HCT116 (cell line): ENCODE measurements at regions of chr4 and their contacts with region 1.

Region 1: DNA sequence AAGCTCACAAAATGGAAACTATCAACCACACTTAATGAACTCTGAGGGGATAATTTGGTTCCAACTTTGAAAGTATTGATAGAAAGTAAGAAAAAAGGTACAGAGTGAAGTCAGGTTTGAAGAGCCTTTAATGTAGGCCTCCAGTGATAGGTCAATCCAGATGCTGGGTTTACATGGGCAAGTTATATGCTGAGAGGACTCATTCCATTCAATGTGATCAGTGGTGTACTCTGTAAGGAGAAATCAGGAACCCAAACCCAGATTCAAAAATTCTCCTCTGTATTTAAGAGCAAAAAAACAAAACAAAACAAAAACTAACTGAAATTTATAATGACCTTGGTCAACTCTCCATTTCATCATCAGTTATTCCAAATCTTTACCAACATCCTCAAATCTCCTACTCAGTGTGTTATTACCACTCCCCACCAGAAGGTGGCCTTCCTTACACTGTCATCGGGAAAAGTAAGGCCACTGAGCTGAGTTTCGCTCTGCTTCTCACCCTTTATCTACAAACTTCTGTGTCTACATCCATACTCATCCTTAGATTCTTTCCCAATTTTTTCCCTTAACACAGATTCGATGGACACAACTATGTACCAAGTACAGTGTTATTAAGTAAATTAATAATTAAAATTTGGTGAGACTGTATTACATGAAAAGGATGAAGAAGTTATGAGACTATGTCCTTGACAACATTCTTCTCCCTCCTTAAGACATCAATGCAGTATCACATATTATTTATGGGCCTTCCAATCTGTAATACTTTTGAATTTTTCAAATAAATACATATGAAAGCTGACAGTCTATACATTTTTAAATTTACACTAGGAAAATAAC is 88.3 kb downstream of the ZAR1 start:
- DNase-seq: peak; percentile 36
- ATAC-seq: peak; percentile 91
- H3K4me3 ChIP-seq: no peak overlapping the region
- H3K27ac ChIP-seq: no peak overlapping the region
- H3K4me1 ChIP-seq: no peaks in the 10 kb centered on the region
- H3K27me3 ChIP-seq: no peaks in the 10 kb centered on the region
- CTCF ChIP-seq: peak; percentile 78
- POLR2A ChIP-seq: no peak
- RAD21 ChIP-seq: peak; percentile 85

Region 2: GRCh38 chr4:48008021-48008596 is 570.2 kb before region 1 on chr4:
- CTCF ChIA-PET with region 1: no interaction called
- POLR2A ChIA-PET with region 1: no interaction called
- RAD21 ChIA-PET with region 1: no interaction called
- intact Hi-C with region 1: no loop called
- DNase-seq: peak; percentile 34
- ATAC-seq: no peak
- H3K4me3 ChIP-seq: no peak overlapping the region
- H3K27ac ChIP-seq: no peak overlapping the region
- H3K4me1 ChIP-seq: no peaks in the 10 kb centered on the region
- H3K27me3 ChIP-seq: no peaks in the 10 kb centered on the region
- CTCF ChIP-seq: no peak
- POLR2A ChIP-seq: no peak
- RAD21 ChIP-seq: no peak

Region 3: DNA sequence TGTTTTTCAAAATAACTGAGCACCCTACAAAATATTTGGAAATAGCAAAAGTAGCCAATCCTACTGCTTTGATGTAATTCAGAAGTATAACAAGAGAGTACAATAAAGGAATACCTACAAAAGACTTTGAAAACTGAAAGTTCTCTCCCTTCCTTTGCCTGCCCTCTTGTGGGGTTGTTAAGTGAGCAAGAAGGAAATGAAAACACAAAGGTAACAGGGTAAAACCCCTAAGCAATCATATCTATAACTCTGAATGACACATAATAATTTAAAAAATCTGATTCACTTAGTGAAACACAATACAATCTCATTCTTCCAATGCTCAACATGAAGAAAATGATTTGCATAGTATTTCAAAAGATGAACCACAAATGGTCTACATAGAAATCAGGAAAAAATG is 103.5 kb after region 1 on chr4:
- CTCF ChIA-PET with region 1: interaction called, 6 read pairs
- POLR2A ChIA-PET with region 1: no interaction called
- RAD21 ChIA-PET with region 1: no interaction called
- intact Hi-C with region 1: loop called (anchors 5 kb)
- DNase-seq: no peak
- ATAC-seq: no peak
- H3K4me3 ChIP-seq: no peak overlapping the region
- H3K27ac ChIP-seq: no peak overlapping the region
- H3K4me1 ChIP-seq: no peaks in the 10 kb centered on the region
- H3K27me3 ChIP-seq: no peaks in the 10 kb centered on the region
- CTCF ChIP-seq: peak in 2 of 3 experiments; percentile 32 to 34; a peak in 3 of 6 replicates
- POLR2A ChIP-seq: no peak
- RAD21 ChIP-seq: peak; percentile 51

Region 4: GRCh38 chr4:48779998-48780742 is 201.8 kb after region 1 on chr4 and contains the start of gene FRYL:
- CTCF ChIA-PET with region 1: interaction called, 5 read pairs
- POLR2A ChIA-PET with region 1: no interaction called
- RAD21 ChIA-PET with region 1: no interaction called
- intact Hi-C with region 1: loop called (anchors 5 kb)
- DNase-seq: peak; percentile 99
- ATAC-seq: peak; percentile 93
- H3K4me3 ChIP-seq: peak within 1 kb of the TSS; percentile 68 to 71
- H3K27ac ChIP-seq: peak within 1 kb of the TSS; percentile 86
- H3K4me1 ChIP-seq: peaks cover 8 to 24% of the 10 kb centered on the region in 2 experiments
- H3K27me3 ChIP-seq: no peaks in the 10 kb centered on the region
- CTCF ChIP-seq: no peak
- POLR2A ChIP-seq: peak; percentile 75
- RAD21 ChIP-seq: no peak
- total RNA-seq, gene FRYL: 47.7 TPM

Region 5: DNA sequence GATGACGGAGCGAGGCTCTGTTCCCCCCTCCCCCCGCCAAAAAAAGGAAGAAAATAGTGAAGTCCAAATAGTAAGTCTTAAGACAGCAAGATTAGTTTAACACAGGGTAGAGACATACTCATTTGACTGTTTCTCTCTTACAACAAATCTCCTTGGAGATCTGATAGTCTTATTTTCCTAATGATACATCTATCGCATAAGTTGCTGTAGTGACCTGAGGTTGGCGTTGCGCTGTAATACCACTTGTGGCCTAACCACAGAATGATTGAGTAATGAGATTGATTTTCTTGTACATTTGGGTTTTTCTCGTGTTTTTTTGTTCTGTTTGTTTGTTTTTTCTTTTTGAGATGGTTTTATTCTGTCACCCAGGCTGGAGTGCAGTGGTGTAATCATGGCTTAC is 279.8 kb after region 1 on chr4:
- CTCF ChIA-PET with region 1: interaction called, 6 read pairs
- POLR2A ChIA-PET with region 1: no interaction called
- RAD21 ChIA-PET with region 1: no interaction called
- intact Hi-C with region 1: loop called (anchors 10 kb)
- DNase-seq: no peak
- ATAC-seq: no peak
- H3K4me3 ChIP-seq: no peak overlapping the region
- H3K27ac ChIP-seq: no peak overlapping the region
- H3K4me1 ChIP-seq: no peaks in the 10 kb centered on the region
- H3K27me3 ChIP-seq: no peaks in the 10 kb centered on the region
- CTCF ChIP-seq: 0 out of 6 replicates have a peak, but pooled peaks of 1 of the 3 experiments have one; percentile 12
- POLR2A ChIP-seq: no peak
- RAD21 ChIP-seq: no peak

Region 6: GRCh38 chr4:48906206-48907173 is 328.1 kb after region 1 on chr4 and contains the start of gene OCIAD2:
- CTCF ChIA-PET with region 1: interaction called, 4 read pairs
- POLR2A ChIA-PET with region 1: no interaction called
- RAD21 ChIA-PET with region 1: interaction called in 1 of 2 experiments, 3 read pairs
- intact Hi-C with region 1: loop called (anchors 5 kb)
- DNase-seq: peak; percentile 55
- ATAC-seq: peak; percentile 82
- H3K4me3 ChIP-seq: peak within 1 kb of the TSS; percentile 78 to 84
- H3K27ac ChIP-seq: peak within 1 kb of the TSS; percentile 70; the same call in 1 of the 2 replicates
- H3K4me1 ChIP-seq: peaks cover 18 to 46% of the 10 kb centered on the region in 2 experiments
- H3K27me3 ChIP-seq: no peaks in the 10 kb centered on the region
- CTCF ChIP-seq: peak in 2 of 3 experiments; percentile 27 to 33; a peak in 3 of 6 replicates
- POLR2A ChIP-seq: no peak
- RAD21 ChIP-seq: peak; percentile 51; the same call in 1 of the 2 replicates
- total RNA-seq, gene OCIAD2: 64.0 TPM

Region 7: GRCh38 chr4:48944756-48945241 is 366.4 kb after region 1 on chr4:
- CTCF ChIA-PET with region 1: interaction called, 14 read pairs
- POLR2A ChIA-PET with region 1: no interaction called
- RAD21 ChIA-PET with region 1: no interaction called
- intact Hi-C with region 1: no loop called
- DNase-seq: no peak
- ATAC-seq: peak; percentile 70
- H3K4me3 ChIP-seq: peak overlapping the region in 1 of 2 experiments; percentile 24; a peak in 3 of 4 replicates
- H3K27ac ChIP-seq: peak overlapping the region; percentile 58
- H3K4me1 ChIP-seq: peaks cover 12 to 27% of the 10 kb centered on the region in 2 experiments
- H3K27me3 ChIP-seq: no peaks in the 10 kb centered on the region
- CTCF ChIP-seq: peak; percentile 45 to 90 (median 88); a peak in 5 of 6 replicates
- POLR2A ChIP-seq: no peak
- RAD21 ChIP-seq: peak; percentile 39